ENCODE measurements at regions of chr3 and their contacts with region 1.

Region 1: DNA sequence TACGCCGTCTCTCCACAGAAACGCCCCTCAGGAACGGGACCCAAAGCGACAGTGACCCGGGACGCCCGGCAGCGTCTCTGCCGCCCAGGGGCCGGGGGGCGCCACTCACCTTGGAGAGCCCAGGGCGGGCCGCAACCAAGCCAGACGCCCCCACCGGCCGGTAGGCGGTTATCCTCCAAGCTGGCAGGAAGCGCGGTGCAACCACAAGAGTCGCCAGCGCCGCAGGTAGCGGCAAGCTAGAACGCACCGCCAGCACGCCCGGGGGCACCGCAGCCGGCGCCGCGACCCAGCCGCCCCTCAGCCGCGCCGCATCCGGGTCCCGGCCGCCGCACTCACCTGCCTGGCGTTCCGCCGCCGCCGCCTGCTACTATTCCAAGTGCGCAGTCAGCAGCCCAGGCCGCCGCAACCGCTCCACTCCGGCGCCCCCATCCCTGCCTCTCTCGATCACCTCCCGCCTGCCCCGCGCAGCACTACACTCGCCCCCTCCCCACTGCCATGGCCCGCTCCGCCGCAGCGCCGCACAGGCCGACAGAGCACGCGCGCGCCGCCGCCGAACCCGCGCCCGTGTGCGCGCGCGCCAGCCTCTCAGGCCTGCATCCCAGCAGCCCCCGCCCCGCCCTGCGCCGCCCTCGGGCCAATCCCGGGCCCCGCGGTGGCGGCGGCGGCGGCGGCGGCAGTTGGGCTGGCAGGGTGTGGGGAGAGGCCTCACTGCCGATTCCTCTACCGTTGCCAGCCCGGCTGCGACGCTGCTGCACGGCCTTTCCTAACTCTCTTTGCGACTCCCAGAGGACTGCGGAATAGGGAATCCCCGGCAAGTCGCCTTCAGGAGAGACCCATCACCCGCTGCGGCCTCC is at the start of gene PIK3CB:
- DNase-seq: peak; percentile 97
- ATAC-seq: peak; percentile 99
- total RNA-seq, gene PIK3CB: 33.3 TPM

Region 2: DNA sequence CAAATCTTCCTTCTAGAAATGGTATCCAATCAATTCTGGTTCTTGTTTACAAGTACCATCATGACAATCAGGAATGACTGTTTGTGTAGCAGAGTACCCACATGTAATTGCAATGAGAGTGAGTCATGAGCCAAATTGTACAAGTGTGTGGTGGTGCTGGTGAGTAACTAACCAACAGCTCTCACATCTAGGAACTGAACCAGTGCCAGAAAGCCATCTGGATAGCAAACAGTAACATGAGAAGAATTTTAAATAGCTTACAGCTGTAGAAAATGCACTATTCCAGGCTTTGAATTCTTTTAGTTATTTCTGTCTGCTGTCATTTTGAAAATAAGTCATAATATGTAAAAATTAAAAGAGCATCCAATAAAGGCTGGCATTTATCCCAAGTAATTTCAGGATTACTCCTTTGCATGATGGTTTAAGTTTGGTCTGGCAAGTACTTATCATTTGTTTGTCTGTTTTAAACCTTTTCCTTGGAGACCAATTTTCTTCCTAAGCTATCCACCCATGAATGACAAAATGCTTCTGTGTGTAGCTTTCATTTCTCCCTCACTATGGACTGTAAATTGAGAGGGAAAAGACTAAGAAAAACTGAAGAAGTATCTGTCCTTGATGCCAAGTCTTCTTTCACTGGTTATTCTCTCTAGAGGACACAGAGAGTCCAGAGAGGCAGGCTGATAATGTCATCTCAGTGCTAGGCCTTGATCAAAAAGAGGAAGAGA is 59.9 kb before region 1 on chr3:
- intact Hi-C with region 1: loop called (anchors 10 kb)
- DNase-seq: no peak
- ATAC-seq: peak; percentile 91

Measured in left ventricle myocardium superior (tissue), 1 donor.